Sigmoid colon (tissue), 7 donors: ENCODE measurements at regions of chrX and their contacts with region 1.

Region 1: GRCh38 chrX:71098302-71098701 is 2.7 kb downstream of the FOXO4 start:
- DNase-seq: peak; percentile 77
- H3K4me3 ChIP-seq: no peak overlapping the region
- H3K27ac ChIP-seq: no peak overlapping the region
- H3K4me1 ChIP-seq: peaks cover 0 to 22% (median 10%) of the 10 kb centered on the region in 4 donors
- H3K27me3 ChIP-seq: no peaks in the 10 kb centered on the region
- CTCF ChIP-seq: peak in 3 of 4 experiments; percentile 21 to 42 (median 38)
- EP300 ChIP-seq: no peak
- POLR2A ChIP-seq: no peak

Region 2: GRCh38 chrX:71128915-71129765 is 30.8 kb after region 1 on chrX:
- intact Hi-C with region 1: loop called (anchors 2 kb)
- DNase-seq: peak; percentile 80
- H3K4me3 ChIP-seq: no peak overlapping the region
- H3K27ac ChIP-seq: no peak overlapping the region
- H3K4me1 ChIP-seq: no peaks in the 10 kb centered on the region
- H3K27me3 ChIP-seq: no peaks in the 10 kb centered on the region
- CTCF ChIP-seq: peak in 3 of 4 experiments; percentile 48 to 55 (median 55)
- EP300 ChIP-seq: no peak
- POLR2A ChIP-seq: no peak